ENCODE measurements at regions of chr6 and their contacts with region 1.

Region 1: DNA sequence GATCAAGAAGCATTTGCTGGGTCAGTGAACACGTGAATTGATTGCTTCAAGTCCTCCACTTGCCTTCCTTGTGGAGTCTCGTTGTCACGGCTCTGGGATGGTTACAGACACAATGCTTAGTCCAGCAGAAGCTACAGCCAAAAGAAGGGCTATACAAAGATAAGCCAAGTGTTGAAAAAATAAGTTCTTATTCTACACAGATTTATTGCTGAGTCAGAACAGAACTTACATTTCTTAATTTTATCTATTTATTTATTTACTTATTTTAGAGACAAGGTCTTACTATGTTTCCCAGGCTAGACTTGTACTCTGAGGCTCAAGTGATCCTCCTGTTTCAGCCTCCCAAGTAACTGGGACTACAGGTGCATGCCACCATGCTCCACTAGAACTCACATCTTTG is 199.0 kb downstream of the MYLK4 start:
- DNase-seq: no peak
- ATAC-seq: no peak

Region 2: DNA sequence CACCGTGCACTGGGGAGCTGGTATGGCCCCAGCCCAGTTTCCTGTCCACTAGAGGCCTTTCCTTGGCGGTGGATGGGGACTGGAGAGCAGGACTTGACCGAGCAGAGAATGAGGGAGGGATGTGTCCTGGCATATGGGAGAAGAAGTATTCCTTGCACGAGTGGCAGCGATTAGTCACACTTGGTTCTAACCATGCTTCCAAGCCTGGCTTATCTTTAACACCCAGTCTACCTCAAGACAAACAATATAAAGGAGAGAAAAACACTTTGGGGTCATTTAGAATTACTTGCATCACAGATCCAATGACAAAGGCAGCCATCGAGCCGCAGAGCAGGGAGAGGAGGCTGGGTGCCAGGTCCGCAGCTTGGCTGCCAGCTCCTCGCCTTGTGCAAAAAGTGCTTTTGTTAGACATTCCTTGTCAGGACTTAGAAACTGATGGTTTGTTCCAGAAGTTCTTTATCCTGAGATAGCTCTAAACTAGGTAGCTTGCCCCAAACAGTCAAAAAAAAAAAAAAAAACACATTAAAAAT is 91.4 kb before region 1 on chr6:
- intact Hi-C with region 1: no loop called
- DNase-seq: no peak
- ATAC-seq: no peak

Region 3: GRCh38 chr6:2512802-2513201 is 38.9 kb before region 1 on chr6:
- intact Hi-C with region 1: loop called (anchors 1 kb)
- DNase-seq: no peak
- ATAC-seq: no peak

Region 4: GRCh38 chr6:2531426-2532215 is 20.1 kb before region 1 on chr6:
- intact Hi-C with region 1: no loop called
- DNase-seq: no peak
- ATAC-seq: no peak